HepG2 (cell line): ENCODE measurements at regions of chr9 and their contacts with region 1.

Region 1: GRCh38 chr9:115106642-115107041 is 11.3 kb downstream of the TNC start:
- DNase-seq: no peak
- ATAC-seq: no peak
- H3K4me3 ChIP-seq: no peak overlapping the region
- H3K27ac ChIP-seq: no peak overlapping the region
- H3K4me1 ChIP-seq: no peaks in the 10 kb centered on the region
- H3K27me3 ChIP-seq: no peaks in the 10 kb centered on the region
- CTCF ChIP-seq: no peak
- EP300 ChIP-seq: no peak
- POLR2A ChIP-seq: no peak
- RAD21 ChIP-seq: no peak

Region 2: DNA sequence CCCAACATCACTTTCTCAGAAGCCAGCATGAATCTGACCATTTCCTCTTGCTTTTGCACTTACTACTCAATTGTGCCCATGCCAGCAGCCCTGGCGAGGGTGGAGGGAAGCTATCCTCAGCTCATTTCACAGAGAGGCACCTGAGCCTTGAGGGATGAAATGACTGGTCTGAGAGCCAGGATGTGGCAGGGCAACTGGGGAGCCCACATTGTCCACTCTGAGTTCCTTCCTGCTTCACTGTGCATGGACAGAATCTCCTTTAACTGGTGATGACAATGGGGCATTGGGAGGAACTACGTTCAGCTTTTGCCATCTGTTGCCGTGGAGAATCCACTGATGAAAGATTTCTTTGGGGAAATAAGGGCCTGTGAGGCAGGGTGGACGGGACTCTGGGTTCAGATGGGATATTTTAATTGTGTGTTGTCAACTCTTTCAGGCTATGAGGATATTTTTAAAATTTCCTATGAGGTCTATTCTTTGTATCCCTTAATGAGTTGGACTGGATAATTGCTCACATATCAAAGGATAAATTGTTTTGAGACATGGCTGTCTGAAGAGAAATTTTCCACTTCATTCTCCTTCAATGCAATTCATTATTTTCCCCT is 67.0 kb before region 1 on chr9:
- CTCF ChIA-PET with region 1: no interaction called
- POLR2A ChIA-PET with region 1: no interaction called
- in situ Hi-C with region 1: no loop called
- intact Hi-C with region 1: loop called (anchors 2 kb)
- DNase-seq: no peak
- ATAC-seq: no peak
- H3K4me3 ChIP-seq: no peak overlapping the region
- H3K27ac ChIP-seq: no peak overlapping the region
- H3K4me1 ChIP-seq: no peaks in the 10 kb centered on the region
- H3K27me3 ChIP-seq: no peaks in the 10 kb centered on the region
- CTCF ChIP-seq: no peak
- EP300 ChIP-seq: no peak
- POLR2A ChIP-seq: no peak
- RAD21 ChIP-seq: no peak

Region 3: GRCh38 chr9:115192835-115193525 is 86.3 kb after region 1 on chr9:
- CTCF ChIA-PET with region 1: no interaction called
- POLR2A ChIA-PET with region 1: no interaction called
- in situ Hi-C with region 1: no loop called
- intact Hi-C with region 1: no loop called
- DNase-seq: no peak
- ATAC-seq: no peak
- H3K4me3 ChIP-seq: no peak overlapping the region
- H3K27ac ChIP-seq: no peak overlapping the region
- H3K4me1 ChIP-seq: no peaks in the 10 kb centered on the region
- H3K27me3 ChIP-seq: no peaks in the 10 kb centered on the region
- CTCF ChIP-seq: no peak
- EP300 ChIP-seq: no peak
- POLR2A ChIP-seq: no peak
- RAD21 ChIP-seq: no peak

Region 4: DNA sequence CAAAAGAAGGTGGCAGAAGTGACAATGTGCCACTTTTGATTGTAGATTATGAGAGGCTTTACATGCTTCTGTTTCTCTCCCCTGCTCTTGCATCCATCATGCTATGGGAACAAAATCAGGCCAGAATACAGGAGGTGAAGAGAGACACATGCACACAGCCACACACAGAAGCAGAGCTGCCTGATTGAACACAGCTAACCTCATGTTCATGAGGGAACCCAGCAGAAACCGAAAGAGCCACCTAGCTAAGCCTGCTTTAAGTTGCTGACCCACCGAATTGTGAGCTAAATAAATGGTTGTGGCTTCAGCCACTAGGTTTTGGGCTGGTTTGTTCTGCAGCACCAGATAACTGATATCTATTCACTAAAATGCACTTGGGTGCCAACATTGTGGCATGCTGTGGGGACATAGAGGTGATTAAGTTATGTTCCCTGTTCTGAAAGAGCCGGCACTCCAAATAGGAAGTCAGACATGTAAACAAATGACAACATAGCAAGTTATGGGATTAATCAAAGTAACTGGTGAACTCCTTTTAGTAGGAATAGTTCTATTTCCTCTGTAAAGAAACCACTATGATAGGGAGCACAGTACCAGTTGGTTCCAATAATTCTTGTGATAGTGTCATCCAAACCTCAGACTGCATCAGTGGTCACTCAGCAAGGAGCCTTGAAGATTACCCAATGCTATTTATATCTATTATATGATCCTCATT is 104.9 kb after region 1 on chr9:
- CTCF ChIA-PET with region 1: no interaction called
- POLR2A ChIA-PET with region 1: no interaction called
- in situ Hi-C with region 1: no loop called
- intact Hi-C with region 1: no loop called
- DNase-seq: no peak
- ATAC-seq: no peak
- H3K4me3 ChIP-seq: no peak overlapping the region
- H3K27ac ChIP-seq: no peak overlapping the region
- H3K4me1 ChIP-seq: no peaks in the 10 kb centered on the region
- H3K27me3 ChIP-seq: 0 out of 5 replicates have a peak, but pooled peaks cover 0 to 3% of the 10 kb centered on the region in 2 experiments
- CTCF ChIP-seq: no peak
- EP300 ChIP-seq: no peak
- POLR2A ChIP-seq: no peak
- RAD21 ChIP-seq: no peak